Endothelial cell of umbilical vein (primary cell): ENCODE measurements at regions of chr4 and their contacts with region 1.

Region 1: DNA sequence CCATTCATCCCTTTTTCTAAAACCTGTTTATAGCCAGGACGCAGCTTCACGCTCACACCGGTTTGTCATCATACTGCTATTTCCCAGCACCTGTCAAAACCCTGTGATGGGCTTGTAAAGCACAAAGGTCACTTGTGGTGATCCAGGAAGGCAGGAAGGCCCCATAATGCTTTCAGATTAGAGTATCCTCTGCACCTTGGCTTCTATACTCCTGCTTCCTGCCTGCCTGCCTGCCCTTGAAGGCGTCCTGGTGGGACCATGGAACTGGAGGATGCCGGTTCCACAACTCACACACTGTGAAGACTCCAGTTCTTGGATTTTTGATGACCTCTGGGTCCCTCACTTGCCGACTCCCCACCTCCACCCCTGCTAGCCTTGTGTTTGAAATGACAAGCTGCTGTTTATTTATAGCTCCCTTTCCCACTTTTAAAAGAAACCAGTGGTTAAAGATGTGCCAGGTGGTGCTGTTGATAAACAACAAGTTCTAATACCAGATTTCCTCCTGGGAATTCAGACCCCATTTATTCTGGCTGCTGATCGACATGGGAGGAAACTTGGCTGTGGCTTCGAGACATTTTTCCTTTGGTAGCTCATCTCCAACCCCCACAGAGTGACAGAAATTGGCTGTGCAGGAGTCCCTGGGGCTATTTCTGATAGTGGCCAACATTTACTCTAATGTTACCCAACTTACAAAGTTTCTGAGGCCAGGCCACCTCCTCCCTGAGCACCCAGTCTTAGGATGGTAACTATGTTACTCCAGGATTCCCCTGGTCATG is 211.5 kb downstream of the KDR start:
- DNase-seq: peak; percentile 62
- H3K4me3 ChIP-seq: no peak overlapping the region
- H3K27ac ChIP-seq: no peak overlapping the region
- H3K4me1 ChIP-seq: no peaks in the 10 kb centered on the region
- H3K27me3 ChIP-seq: peaks cover 34 to 47% of the 10 kb centered on the region in 2 experiments
- CTCF ChIP-seq: no peak
- POLR2A ChIP-seq: no peak

Region 2: DNA sequence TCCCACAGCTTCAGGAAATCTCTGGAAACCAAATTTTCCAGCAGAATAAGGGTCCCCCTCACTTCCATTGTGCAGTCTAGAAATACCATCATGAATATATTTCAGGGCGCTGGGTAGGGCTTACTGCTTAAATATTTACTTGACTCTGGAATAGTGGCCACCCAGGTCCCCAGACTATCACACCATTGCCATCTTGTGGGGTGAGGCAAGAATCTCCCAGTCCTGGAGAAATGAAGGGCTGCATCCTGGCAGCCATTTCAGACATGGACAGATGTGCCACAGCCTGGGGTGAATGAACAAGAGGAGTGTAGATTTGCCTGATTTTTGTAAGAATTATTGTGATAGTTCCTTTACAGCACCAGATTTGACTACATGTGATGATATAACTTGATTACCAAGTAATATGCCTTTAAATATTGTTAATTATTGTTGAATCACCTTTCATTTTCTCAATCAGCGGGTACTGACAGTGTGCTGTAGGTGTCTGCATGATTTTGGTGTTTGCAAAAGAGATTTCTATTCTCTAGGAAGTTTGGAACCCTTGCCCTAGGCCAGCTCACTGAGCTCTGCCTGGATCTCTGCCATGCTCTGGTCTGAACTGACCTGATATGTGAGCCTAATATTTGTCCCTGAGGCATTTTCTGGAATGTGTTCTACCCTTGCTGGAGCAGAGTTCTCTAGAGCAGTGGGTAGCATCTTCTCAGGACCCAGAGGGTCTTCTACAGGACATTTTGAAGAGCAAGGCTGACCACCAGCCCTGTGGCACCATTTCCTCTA is 72.8 kb before region 1 on chr4:
- CTCF ChIA-PET with region 1: no interaction called
- POLR2A ChIA-PET with region 1: no interaction called
- dilution Hi-C with region 1: no loop called
- intact Hi-C with region 1: no loop called
- DNase-seq: no peak
- H3K4me3 ChIP-seq: no peak overlapping the region
- H3K27ac ChIP-seq: no peak overlapping the region
- H3K4me1 ChIP-seq: no peaks in the 10 kb centered on the region
- H3K27me3 ChIP-seq: peaks cover 7 to 11% of the 10 kb centered on the region in 2 experiments
- CTCF ChIP-seq: no peak
- POLR2A ChIP-seq: no peak

Region 3: GRCh38 chr4:54930226-54930625 is 16.3 kb after region 1 on chr4:
- CTCF ChIA-PET with region 1: interaction called, 3 read pairs
- POLR2A ChIA-PET with region 1: no interaction called
- dilution Hi-C with region 1: no loop called
- intact Hi-C with region 1: loop called (anchors 1 kb)
- DNase-seq: peak; percentile 99
- H3K4me3 ChIP-seq: peak overlapping the region in 1 of 3 experiments; percentile 28
- H3K27ac ChIP-seq: peak overlapping the region; percentile 99
- H3K4me1 ChIP-seq: peaks cover 33% of the 10 kb centered on the region
- H3K27me3 ChIP-seq: no peaks in the 10 kb centered on the region
- CTCF ChIP-seq: no peak
- POLR2A ChIP-seq: no peak

Region 4: GRCh38 chr4:55032788-55033187 is 118.8 kb after region 1 on chr4:
- CTCF ChIA-PET with region 1: no interaction called
- POLR2A ChIA-PET with region 1: no interaction called
- dilution Hi-C with region 1: no loop called
- intact Hi-C with region 1: no loop called
- DNase-seq: no peak
- H3K4me3 ChIP-seq: no peak overlapping the region
- H3K27ac ChIP-seq: no peak overlapping the region
- H3K4me1 ChIP-seq: no peaks in the 10 kb centered on the region
- H3K27me3 ChIP-seq: peaks cover 0 to 2% of the 10 kb centered on the region in 2 experiments
- CTCF ChIP-seq: no peak
- POLR2A ChIP-seq: no peak

Region 5: GRCh38 chr4:55458164-55458563 is 544.2 kb after region 1 on chr4:
- CTCF ChIA-PET with region 1: no interaction called
- POLR2A ChIA-PET with region 1: no interaction called
- dilution Hi-C with region 1: no loop called
- intact Hi-C with region 1: no loop called
- DNase-seq: no peak
- H3K4me3 ChIP-seq: no peak overlapping the region
- H3K27ac ChIP-seq: no peak overlapping the region
- H3K4me1 ChIP-seq: peaks cover 7% of the 10 kb centered on the region
- H3K27me3 ChIP-seq: no peaks in the 10 kb centered on the region
- CTCF ChIP-seq: no peak
- POLR2A ChIP-seq: no peak

Region 6: GRCh38 chr4:55781812-55782211 is 867.9 kb after region 1 on chr4:
- CTCF ChIA-PET with region 1: no interaction called
- POLR2A ChIA-PET with region 1: no interaction called
- dilution Hi-C with region 1: no loop called
- intact Hi-C with region 1: no loop called
- DNase-seq: no peak
- H3K4me3 ChIP-seq: no peak overlapping the region
- H3K27ac ChIP-seq: no peak overlapping the region
- H3K4me1 ChIP-seq: no peaks in the 10 kb centered on the region
- H3K27me3 ChIP-seq: peaks cover 3 to 13% of the 10 kb centered on the region in 2 experiments
- CTCF ChIP-seq: no peak
- POLR2A ChIP-seq: no peak